ENCODE measurements at regions of chr3 and their contacts with region 1.

Region 1: DNA sequence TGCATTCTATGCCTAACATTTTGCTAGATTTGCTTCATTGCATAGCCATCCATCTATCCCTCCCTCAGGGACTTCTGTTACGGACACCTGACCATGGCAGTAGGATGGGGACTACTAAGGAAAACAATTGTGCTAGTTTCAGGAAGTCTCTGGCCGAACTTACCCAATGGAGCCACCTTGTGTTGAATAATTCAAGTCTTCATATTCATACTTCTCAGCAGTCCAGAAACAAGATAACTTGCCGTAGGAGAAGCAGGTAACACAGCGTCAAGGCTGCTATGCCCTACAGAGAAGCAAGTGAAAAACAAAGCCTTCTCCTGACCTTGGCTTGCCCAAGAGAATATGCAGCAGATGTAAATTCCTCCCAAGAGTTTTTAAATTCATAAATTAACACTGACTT is 685.3 kb downstream of the GRM7 start:
- DNase-seq: no peak

Region 2: DNA sequence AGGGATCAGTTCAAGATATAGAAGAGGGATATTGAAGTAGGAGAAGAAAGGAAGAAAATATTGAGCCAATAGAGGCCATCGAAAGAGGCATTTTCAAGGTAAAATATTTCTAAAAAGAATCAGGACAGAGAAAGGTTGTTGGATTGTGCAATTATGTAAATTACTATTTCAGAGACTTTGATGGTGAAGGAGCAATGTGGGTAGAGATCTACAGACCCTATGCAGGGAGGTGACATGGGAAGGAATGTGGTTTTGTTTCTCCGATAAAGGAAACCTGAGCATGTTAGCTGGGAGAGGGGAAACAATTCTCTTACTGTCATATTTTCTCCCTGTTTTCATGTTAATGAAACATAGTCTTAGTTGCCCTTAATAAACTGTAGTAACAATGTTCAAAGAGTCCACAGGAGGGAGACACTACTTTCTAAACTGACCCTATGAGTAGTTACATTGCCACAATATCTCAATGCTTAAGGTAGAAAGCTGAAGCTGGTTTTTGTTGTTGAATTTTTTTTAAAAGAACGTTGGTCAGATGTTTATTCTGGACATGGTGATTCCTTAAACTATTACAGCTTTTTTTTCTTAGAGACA is 552.1 kb before region 1 on chr3:
- intact Hi-C with region 1: loop called (anchors 10 kb)
- DNase-seq: no peak

Region 3: GRCh38 chr3:7285505-7285904 is 260.7 kb before region 1 on chr3:
- intact Hi-C with region 1: loop called (anchors 10 kb)
- DNase-seq: no peak

Measured in cardiac septum (tissue), 1 donor.